ENCODE measurements at regions of chr7 and their contacts with region 1.

Region 1: GRCh38 chr7:5363729-5364128 is 59.9 kb downstream of the TNRC18 start:
- DNase-seq: no peak
- ATAC-seq: no peak
- H3K4me3 ChIP-seq: no peak overlapping the region
- H3K4me3 Mint-ChIP-seq: peak overlapping the region; percentile 75
- H3K27ac ChIP-seq: no peak overlapping the region
- H3K27ac Mint-ChIP-seq: peak overlapping the region; percentile 73 to 74
- H3K4me1 ChIP-seq: peaks cover 79% of the 10 kb centered on the region
- H3K4me1 Mint-ChIP-seq: peaks cover 29 to 56% of the 10 kb centered on the region in 2 donors
- H3K27me3 ChIP-seq: no peaks in the 10 kb centered on the region
- H3K27me3 Mint-ChIP-seq: no peaks in the 10 kb centered on the region
- CTCF ChIP-seq: no peak

Region 2: GRCh38 chr7:5382281-5382892 is 18.7 kb after region 1 on chr7:
- intact Hi-C with region 1: no loop called
- DNase-seq: no peak
- ATAC-seq: peak in 2 of 3 donors; percentile 24 to 46
- H3K4me3 ChIP-seq: no peak overlapping the region
- H3K4me3 Mint-ChIP-seq: no peak overlapping the region
- H3K27ac ChIP-seq: no peak overlapping the region
- H3K27ac Mint-ChIP-seq: peak overlapping the region in 1 of 2 donors; percentile 83
- H3K4me1 ChIP-seq: peaks cover 55% of the 10 kb centered on the region
- H3K4me1 Mint-ChIP-seq: peaks cover 27 to 55% of the 10 kb centered on the region in 2 donors
- H3K27me3 ChIP-seq: no peaks in the 10 kb centered on the region
- H3K27me3 Mint-ChIP-seq: no peaks in the 10 kb centered on the region
- CTCF ChIP-seq: no peak

Region 3: GRCh38 chr7:5704534-5704922 is 340.8 kb after region 1 on chr7:
- intact Hi-C with region 1: loop called (anchors 1 kb)
- DNase-seq: peak; percentile 57 to 89
- ATAC-seq: peak; percentile 41 to 58 (median 46)
- H3K4me3 ChIP-seq: no peak overlapping the region
- H3K4me3 Mint-ChIP-seq: no peak overlapping the region
- H3K27ac ChIP-seq: no peak overlapping the region
- H3K27ac Mint-ChIP-seq: no peak overlapping the region
- H3K4me1 ChIP-seq: peaks cover 26% of the 10 kb centered on the region
- H3K4me1 Mint-ChIP-seq: peaks cover 31 to 32% of the 10 kb centered on the region in 2 donors
- H3K27me3 ChIP-seq: no peaks in the 10 kb centered on the region
- H3K27me3 Mint-ChIP-seq: no peaks in the 10 kb centered on the region
- CTCF ChIP-seq: peak; percentile 72

Measured in natural killer cell (primary cell).